ENCODE measurements at regions of chr2 and their contacts with region 1.

Region 1: GRCh38 chr2:41853427-41854216 is 194.2 kb upstream of the PKDCC start:
- DNase-seq: peak; percentile 71
- H3K4me3 ChIP-seq: no peak overlapping the region
- H3K27ac ChIP-seq: no peak overlapping the region
- H3K4me1 ChIP-seq: peaks cover 0 to 7% of the 10 kb centered on the region in 2 experiments; a peak in 1 of 4 replicates
- H3K27me3 ChIP-seq: no peaks in the 10 kb centered on the region; the same call in 1 of the 2 replicates
- CTCF ChIP-seq: peak; percentile 91
- EP300 ChIP-seq: 0 out of 4 replicates have a peak, but pooled peaks of 1 of the 2 experiments have one; percentile 13
- RAD21 ChIP-seq: peak; percentile 99

Region 2: GRCh38 chr2:41572164-41572563 is 281.5 kb before region 1 on chr2:
- CTCF ChIA-PET with region 1: no interaction called
- POLR2A ChIA-PET with region 1: no interaction called
- DNase-seq: no peak
- H3K4me3 ChIP-seq: no peak overlapping the region
- H3K27ac ChIP-seq: no peak overlapping the region
- H3K4me1 ChIP-seq: peaks cover 0 to 2% of the 10 kb centered on the region in 2 experiments; a peak in 2 of 4 replicates
- H3K27me3 ChIP-seq: no peaks in the 10 kb centered on the region
- CTCF ChIP-seq: no peak
- EP300 ChIP-seq: no peak
- RAD21 ChIP-seq: no peak

Region 3: DNA sequence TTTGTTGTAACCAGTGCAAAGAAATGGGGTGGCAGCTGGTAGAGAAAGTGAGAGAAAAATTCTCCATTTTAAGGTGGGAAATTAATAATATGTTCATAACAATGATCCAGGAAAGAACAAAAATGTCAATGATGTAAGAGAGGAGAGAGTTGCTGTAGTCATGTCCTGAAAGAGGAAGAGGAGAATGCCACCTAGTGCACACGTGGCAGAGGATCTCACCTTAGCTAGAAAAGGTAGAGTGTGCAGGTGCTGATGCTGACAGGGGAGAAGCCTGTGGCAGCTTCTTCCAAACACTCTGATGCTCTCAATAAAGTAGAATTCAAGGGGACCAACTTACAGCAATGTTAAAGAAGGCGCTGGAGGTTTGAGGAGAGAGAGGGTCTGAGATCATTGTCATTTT is 88.7 kb before region 1 on chr2:
- CTCF ChIA-PET with region 1: no interaction called
- POLR2A ChIA-PET with region 1: no interaction called
- DNase-seq: no peak
- H3K4me3 ChIP-seq: no peak overlapping the region
- H3K27ac ChIP-seq: no peak overlapping the region
- H3K4me1 ChIP-seq: no peaks in the 10 kb centered on the region
- H3K27me3 ChIP-seq: 0 out of 2 replicates have a peak, but pooled peaks cover 6% of the 10 kb centered on the region
- CTCF ChIP-seq: no peak
- EP300 ChIP-seq: no peak
- RAD21 ChIP-seq: no peak

Region 4: GRCh38 chr2:41829011-41829500 is 24.6 kb before region 1 on chr2:
- CTCF ChIA-PET with region 1: interaction called, 13 read pairs
- POLR2A ChIA-PET with region 1: no interaction called
- DNase-seq: no peak
- H3K4me3 ChIP-seq: no peak overlapping the region
- H3K27ac ChIP-seq: no peak overlapping the region
- H3K4me1 ChIP-seq: no peaks in the 10 kb centered on the region
- H3K27me3 ChIP-seq: 0 out of 2 replicates have a peak, but pooled peaks cover 6% of the 10 kb centered on the region
- CTCF ChIP-seq: no peak
- EP300 ChIP-seq: no peak
- RAD21 ChIP-seq: no peak

Region 5: DNA sequence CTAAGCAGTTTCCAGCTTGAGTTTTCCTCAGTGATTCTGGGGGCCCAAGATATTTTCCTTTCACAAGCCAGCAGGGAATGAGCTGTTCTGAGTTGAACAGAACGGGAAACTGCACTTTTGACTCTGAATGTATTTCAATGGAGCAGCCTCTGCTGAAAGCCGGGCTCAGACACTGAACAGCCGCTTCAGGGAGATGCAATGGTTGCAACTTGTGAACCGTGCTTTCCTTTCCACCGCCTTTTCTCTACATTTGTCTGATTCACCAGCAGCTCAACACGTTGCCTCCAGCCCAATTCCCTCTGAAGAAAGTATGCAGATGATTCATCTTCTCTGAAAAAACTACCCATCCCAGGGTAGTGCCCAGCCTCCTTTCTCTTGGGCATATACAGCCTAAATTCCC is 74.9 kb after region 1 on chr2:
- CTCF ChIA-PET with region 1: interaction called, 10 read pairs
- POLR2A ChIA-PET with region 1: no interaction called
- DNase-seq: no peak
- H3K4me3 ChIP-seq: no peak overlapping the region
- H3K27ac ChIP-seq: no peak overlapping the region
- H3K4me1 ChIP-seq: peaks cover 3 to 53% of the 10 kb centered on the region in 2 experiments; a peak in 3 of 4 replicates
- H3K27me3 ChIP-seq: no peaks in the 10 kb centered on the region; the same call in 1 of the 2 replicates
- CTCF ChIP-seq: no peak
- EP300 ChIP-seq: no peak
- RAD21 ChIP-seq: no peak

Region 6: DNA sequence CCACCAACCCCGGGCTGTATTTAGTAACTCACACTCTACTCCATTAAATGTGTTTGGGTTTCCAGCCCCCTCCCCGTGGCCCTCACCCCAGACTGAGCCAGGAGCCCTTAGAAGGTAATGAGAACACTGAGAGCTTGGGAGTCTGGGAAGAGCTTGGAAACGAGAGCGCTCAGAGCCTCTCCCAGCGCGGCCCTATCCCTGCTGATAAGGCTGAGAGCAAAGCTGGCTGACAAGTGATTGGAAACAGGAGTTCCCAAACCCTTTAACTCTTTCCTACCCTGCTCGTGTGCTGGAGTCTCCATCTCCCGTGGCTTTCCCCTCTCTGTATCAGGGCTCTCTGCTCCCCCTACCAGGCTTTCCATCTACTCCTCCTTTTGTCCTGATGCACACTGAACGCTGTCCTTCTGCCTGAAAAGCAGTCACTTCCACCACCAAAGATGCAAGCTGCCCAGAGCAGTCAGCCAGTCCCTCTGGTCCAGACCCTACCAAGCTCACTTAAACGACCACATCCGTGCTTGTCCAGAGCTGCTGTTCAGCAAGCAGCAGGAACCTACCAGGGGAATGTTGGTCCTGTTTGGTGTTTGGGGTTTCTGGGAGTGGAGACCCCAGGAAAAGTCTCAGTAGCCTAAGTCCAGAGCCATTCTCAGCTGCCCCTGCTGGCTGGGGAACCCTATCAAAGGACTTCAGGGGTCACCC is 94.2 kb after region 1 on chr2:
- CTCF ChIA-PET with region 1: interaction called, 17 read pairs
- POLR2A ChIA-PET with region 1: no interaction called
- DNase-seq: peak; percentile 81
- H3K4me3 ChIP-seq: no peak overlapping the region; a peak in 1 of 4 replicates
- H3K27ac ChIP-seq: peak overlapping the region in 1 of 2 experiments; percentile 95; a peak in 2 of 4 replicates
- H3K4me1 ChIP-seq: peaks cover 0 to 52% of the 10 kb centered on the region in 2 experiments; a peak in 3 of 4 replicates
- H3K27me3 ChIP-seq: peaks cover 15% of the 10 kb centered on the region
- CTCF ChIP-seq: no peak
- EP300 ChIP-seq: peak in 1 of 2 experiments; percentile 89; a peak in 2 of 4 replicates
- RAD21 ChIP-seq: peak; percentile 45

Region 7: GRCh38 chr2:42047488-42048298 is 194.1 kb after region 1 on chr2 and contains the start of gene PKDCC:
- CTCF ChIA-PET with region 1: interaction called, 52 read pairs
- POLR2A ChIA-PET with region 1: interaction called, 5 read pairs
- DNase-seq: peak; percentile 100
- H3K4me3 ChIP-seq: peak within 1 kb of the TSS; percentile 81 to 85
- H3K27ac ChIP-seq: peak within 1 kb of the TSS; percentile 5 to 100; a peak in 3 of 4 replicates
- H3K4me1 ChIP-seq: peaks cover 0 to 67% of the 10 kb centered on the region in 2 experiments; a peak in 2 of 4 replicates
- H3K27me3 ChIP-seq: 0 out of 2 replicates have a peak, but pooled peaks cover 8% of the 10 kb centered on the region
- CTCF ChIP-seq: no peak
- EP300 ChIP-seq: no peak
- RAD21 ChIP-seq: no peak
- polyA plus RNA-seq, gene PKDCC: 16.0 and 19.5 TPM in 2 replicates

Region 8: DNA sequence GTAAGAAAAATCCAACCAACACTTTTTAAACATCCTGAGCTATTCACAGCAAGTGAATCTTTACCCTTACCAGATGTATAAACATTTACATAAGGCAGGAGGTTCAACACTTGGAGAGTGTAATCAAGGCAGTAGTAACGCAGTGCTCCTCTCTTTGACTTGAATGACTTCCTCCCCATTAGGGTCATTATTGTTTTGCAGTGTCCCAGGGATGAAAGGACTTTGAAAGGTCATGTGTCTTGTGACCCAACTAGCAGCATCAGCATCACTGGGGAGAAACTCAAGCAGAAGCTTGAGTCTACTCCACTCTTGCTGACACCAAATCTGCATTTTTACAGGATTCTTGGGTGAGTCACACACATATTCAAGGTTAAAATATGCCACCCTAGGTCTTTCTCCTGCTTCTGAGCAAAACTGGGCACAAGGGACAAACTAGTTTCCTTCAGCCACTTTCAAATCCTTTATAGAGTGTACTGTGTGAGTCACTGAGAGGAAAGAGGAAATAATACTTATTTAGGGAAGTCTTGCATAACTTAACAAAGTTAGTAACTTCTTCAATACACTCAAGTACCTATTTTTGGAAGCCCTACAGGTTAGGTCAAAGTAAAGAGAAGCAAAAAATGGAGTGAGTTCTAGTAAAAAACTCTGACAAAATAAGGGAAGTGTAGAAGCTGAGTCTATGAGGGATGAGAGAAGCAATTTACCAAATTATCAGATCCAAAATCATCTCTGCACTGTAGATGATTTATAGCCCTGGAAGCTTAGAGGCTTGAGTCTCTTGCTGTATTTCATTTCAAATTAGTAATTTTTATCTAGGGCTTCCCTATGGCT is 264.5 kb after region 1 on chr2:
- CTCF ChIA-PET with region 1: interaction called, 12 read pairs
- POLR2A ChIA-PET with region 1: no interaction called
- DNase-seq: no peak
- H3K4me3 ChIP-seq: peak overlapping the region in 1 of 2 experiments; percentile 9; a peak in 1 of 4 replicates
- H3K27ac ChIP-seq: peak overlapping the region; percentile 86 to 94
- H3K4me1 ChIP-seq: peaks cover 21 to 30% of the 10 kb centered on the region in 2 experiments
- H3K27me3 ChIP-seq: no peaks in the 10 kb centered on the region
- CTCF ChIP-seq: no peak
- EP300 ChIP-seq: peak; percentile 52 to 74; a peak in 3 of 4 replicates
- RAD21 ChIP-seq: no peak; the same call in 1 of the 2 replicates

Measured in SK-N-SH (cell line).